Ovary (tissue), 10 donors: ENCODE measurements at regions of chr18 and their contacts with region 1.

Region 1: GRCh38 chr18:39276764-39277163 is 1711.2 kb upstream of the CELF4 start:
- DNase-seq: no peak
- H3K4me3 ChIP-seq: no peak overlapping the region
- H3K27ac ChIP-seq: no peak overlapping the region
- H3K4me1 ChIP-seq: no peaks in the 10 kb centered on the region
- H3K27me3 ChIP-seq: no peaks in the 10 kb centered on the region
- CTCF ChIP-seq: no peak
- EP300 ChIP-seq: no peak
- POLR2A ChIP-seq: no peak

Region 2: DNA sequence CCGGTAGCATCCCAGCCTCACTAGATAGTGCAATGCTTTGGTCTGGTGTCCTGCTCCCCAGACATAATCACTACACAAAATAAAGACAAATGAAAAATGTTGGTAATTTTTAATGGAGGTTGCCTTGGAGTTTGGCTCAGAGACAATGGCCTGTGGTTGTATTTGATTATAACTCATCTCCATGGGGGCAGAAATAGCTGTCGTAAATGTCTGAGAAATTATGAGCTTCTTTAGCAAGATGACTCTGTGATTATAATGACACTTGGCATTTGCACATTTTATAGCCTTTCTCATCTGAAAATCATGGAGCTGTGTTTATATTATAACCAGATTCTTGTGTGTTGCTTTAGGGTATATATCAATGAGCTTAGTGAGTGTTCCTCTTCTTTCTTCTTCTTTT is 68.6 kb after region 1 on chr18:
- intact Hi-C with region 1: loop called in 1 of 4 experiments (anchors 10 kb)
- DNase-seq: no peak
- H3K4me3 ChIP-seq: no peak overlapping the region
- H3K27ac ChIP-seq: no peak overlapping the region
- H3K4me1 ChIP-seq: no peaks in the 10 kb centered on the region
- H3K27me3 ChIP-seq: no peaks in the 10 kb centered on the region
- CTCF ChIP-seq: no peak
- EP300 ChIP-seq: no peak
- POLR2A ChIP-seq: no peak